Transverse colon (tissue), 4 donors: ENCODE measurements at regions of chr17 and their contacts with region 1.

Region 1: GRCh38 chr17:11564589-11565380 is 33.5 kb upstream of the DNAH9 start:
- DNase-seq: no peak
- H3K4me3 ChIP-seq: no peak overlapping the region
- H3K27ac ChIP-seq: no peak overlapping the region
- H3K4me1 ChIP-seq: no peaks in the 10 kb centered on the region
- H3K27me3 ChIP-seq: no peaks in the 10 kb centered on the region
- CTCF ChIP-seq: no peak
- EP300 ChIP-seq: no peak
- POLR2A ChIP-seq: no peak

Region 2: GRCh38 chr17:10357768-10358167 is 1207.0 kb before region 1 on chr17:
- in situ Hi-C with region 1: no loop called
- intact Hi-C with region 1: loop called (anchors 5 kb)
- DNase-seq: no peak
- H3K4me3 ChIP-seq: no peak overlapping the region
- H3K27ac ChIP-seq: no peak overlapping the region
- H3K4me1 ChIP-seq: no peaks in the 10 kb centered on the region
- H3K27me3 ChIP-seq: no peaks in the 10 kb centered on the region
- CTCF ChIP-seq: peak in 3 of 5 experiments; percentile 19 to 40 (median 35)
- EP300 ChIP-seq: no peak
- POLR2A ChIP-seq: no peak

Region 3: GRCh38 chr17:11459861-11460331 is 104.9 kb before region 1 on chr17:
- in situ Hi-C with region 1: no loop called
- intact Hi-C with region 1: loop called (anchors 10 kb)
- DNase-seq: no peak
- H3K4me3 ChIP-seq: no peak overlapping the region
- H3K27ac ChIP-seq: no peak overlapping the region
- H3K4me1 ChIP-seq: no peaks in the 10 kb centered on the region
- H3K27me3 ChIP-seq: no peaks in the 10 kb centered on the region
- CTCF ChIP-seq: no peak
- EP300 ChIP-seq: no peak
- POLR2A ChIP-seq: no peak